Dorsolateral prefrontal cortex (tissue), 120 donors: ENCODE measurements at regions of chrX and their contacts with region 1.

Region 1: DNA sequence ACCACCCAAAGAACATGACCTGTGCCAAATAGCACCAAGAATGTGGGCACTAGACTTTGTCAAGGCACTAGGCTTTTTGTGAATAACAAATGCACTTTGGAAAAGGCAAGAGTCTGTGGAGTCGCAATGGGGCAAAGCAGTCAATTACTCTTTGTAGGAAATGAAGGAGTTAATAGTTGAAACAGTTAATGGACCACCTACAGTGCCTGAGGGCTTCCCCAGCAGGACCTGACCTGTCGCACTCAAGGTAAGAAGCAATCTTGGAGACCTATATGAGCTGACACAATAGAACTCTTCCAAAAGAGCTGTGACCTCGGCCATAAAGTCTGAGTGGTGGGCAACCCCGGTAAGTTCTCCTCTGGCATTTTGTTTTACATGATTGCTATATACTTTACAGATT is 49.2 kb upstream of the CAPN6 start:
- DNase-seq: no peak
- H3K4me3 ChIP-seq: no peak overlapping the region
- H3K27ac ChIP-seq: no peak overlapping the region
- H3K27me3 ChIP-seq: peaks cover 0 to 73% (median 20%) of the 10 kb centered on the region in 45 donors
- CTCF ChIP-seq: no peak

Region 2: GRCh38 chrX:111252316-111252715 is 67.1 kb before region 1 on chrX:
- intact Hi-C with region 1: no loop called
- DNase-seq: no peak
- H3K4me3 ChIP-seq: no peak overlapping the region
- H3K27ac ChIP-seq: no peak overlapping the region
- H3K27me3 ChIP-seq: peaks cover 0 to 88% (median 36%) of the 10 kb centered on the region in 45 donors
- CTCF ChIP-seq: no peak

Region 3: GRCh38 chrX:111375747-111376146 is 56.3 kb after region 1 on chrX:
- intact Hi-C with region 1: loop called in 1 of 2 experiments (anchors 10 kb)
- DNase-seq: no peak
- H3K4me3 ChIP-seq: no peak overlapping the region
- H3K27ac ChIP-seq: peak overlapping the region in 3 of 59 donors; percentile 2 to 18 (median 14)
- H3K27me3 ChIP-seq: peaks cover 0 to 70% (median 21%) of the 10 kb centered on the region in 45 donors
- CTCF ChIP-seq: no peak

Region 4: DNA sequence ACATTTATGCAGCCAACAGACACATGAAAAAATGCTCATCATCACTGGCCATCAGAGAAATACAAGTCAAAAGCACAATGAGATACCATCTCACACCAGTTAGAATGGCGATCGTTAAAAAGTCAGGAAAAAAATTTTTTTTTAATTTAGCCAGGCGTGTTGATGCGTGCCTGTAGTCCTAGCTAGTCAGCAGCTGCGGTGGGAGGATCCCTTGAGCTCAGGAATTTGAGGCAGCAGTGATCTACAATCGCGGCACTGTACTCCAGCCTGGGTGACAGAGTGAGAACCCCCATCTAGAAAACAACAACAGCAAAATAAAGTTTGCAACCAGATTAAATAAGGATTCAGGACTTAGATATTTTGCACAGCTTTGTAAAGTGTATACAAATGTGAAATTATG is 295.8 kb after region 1 on chrX:
- intact Hi-C with region 1: no loop called
- DNase-seq: no peak
- H3K4me3 ChIP-seq: no peak overlapping the region
- H3K27ac ChIP-seq: no peak overlapping the region
- H3K27me3 ChIP-seq: peaks cover 0 to 54% (median 13%) of the 10 kb centered on the region in 45 donors
- CTCF ChIP-seq: no peak

Region 5: DNA sequence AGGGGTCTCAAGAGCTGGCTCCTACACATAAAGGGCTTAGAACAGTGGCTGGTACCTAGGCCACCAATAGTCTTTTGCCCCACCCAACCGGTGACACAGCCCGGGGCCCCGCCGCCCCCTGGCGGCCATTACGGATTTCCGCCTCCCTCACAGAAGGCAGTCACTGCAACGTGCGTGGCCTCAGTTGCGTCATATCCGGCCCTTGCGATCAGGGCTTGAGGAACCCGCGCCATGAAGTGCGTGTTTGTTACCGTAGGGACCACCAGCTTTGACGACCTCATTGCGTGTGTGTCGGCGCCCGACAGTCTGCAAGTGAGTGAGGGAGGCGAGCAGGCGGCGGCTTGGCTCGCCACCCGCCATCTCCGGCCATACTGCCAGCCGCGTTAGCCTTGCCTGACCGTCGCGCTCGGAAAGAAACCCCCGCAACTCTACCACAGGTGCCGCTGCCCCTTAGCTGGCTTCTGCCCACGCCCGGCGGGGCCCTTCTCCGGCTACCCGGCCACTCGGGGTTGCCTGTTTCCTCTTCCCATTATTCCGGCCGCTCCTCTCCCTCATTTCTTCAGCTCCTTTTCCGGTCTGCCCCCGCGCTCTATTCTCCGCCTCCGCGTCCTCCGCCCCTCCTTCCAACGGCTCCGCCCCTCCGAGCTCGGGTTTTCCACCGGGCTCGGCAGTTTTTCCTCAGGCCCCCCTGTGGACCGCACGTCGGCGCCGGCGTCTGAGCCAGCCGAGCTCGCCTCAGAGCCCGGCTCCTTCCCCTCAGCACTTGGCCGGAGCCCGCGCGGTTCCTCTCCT is 361.7 kb after region 1 on chrX and contains the start of gene ALG13:
- intact Hi-C with region 1: no loop called
- DNase-seq: peak; percentile 80 to 92 (median 86)
- H3K4me3 ChIP-seq: peak within 1 kb of the TSS; percentile 45 to 89 (median 72)
- H3K27ac ChIP-seq: peak within 1 kb of the TSS; percentile 35 to 98 (median 93)
- H3K27me3 ChIP-seq: peaks cover 0 to 54% (median 8%) of the 10 kb centered on the region in 45 donors
- CTCF ChIP-seq: peak; percentile 36 to 78 (median 63)
- total RNA-seq, gene ALG13: 39.1 to 78.4 (median 55.9) TPM